ENCODE measurements at regions of chr1 and their contacts with region 1.

Region 1: GRCh38 chr1:91929250-91929649 is 20.0 kb upstream of the BRDT start:
- DNase-seq: no peak
- H3K4me3 ChIP-seq: no peak overlapping the region
- H3K27ac ChIP-seq: no peak overlapping the region
- H3K4me1 ChIP-seq: no peaks in the 10 kb centered on the region
- H3K27me3 ChIP-seq: no peaks in the 10 kb centered on the region
- CTCF ChIP-seq: no peak
- POLR2A ChIP-seq: no peak

Region 2: GRCh38 chr1:91511386-91511785 is 417.9 kb before region 1 on chr1:
- intact Hi-C with region 1: loop called (anchors 5 kb)
- DNase-seq: no peak
- H3K4me3 ChIP-seq: no peak overlapping the region
- H3K27ac ChIP-seq: no peak overlapping the region
- H3K4me1 ChIP-seq: no peaks in the 10 kb centered on the region
- H3K27me3 ChIP-seq: no peaks in the 10 kb centered on the region
- CTCF ChIP-seq: peak; percentile 56 to 79 (median 73)
- POLR2A ChIP-seq: no peak

Measured in uterus (tissue), 4 donors.